Stomach (tissue), 19 donors: ENCODE measurements at regions of chr7 and their contacts with region 1.

Region 1: GRCh38 chr7:134690016-134690415 is 43.4 kb downstream of the BPGM start:
- DNase-seq: peak in 1 of 2 donors; percentile 79
- H3K4me3 ChIP-seq: peak overlapping the region in 3 of 4 donors; percentile 21 to 25 (median 22)
- H3K27ac ChIP-seq: peak overlapping the region in 4 of 5 donors; percentile 65 to 84 (median 76)
- H3K4me1 ChIP-seq: peaks cover 0 to 26% (median 14%) of the 10 kb centered on the region in 4 donors
- H3K27me3 ChIP-seq: peaks cover 0 to 4% (median 0%) of the 10 kb centered on the region in 3 donors
- CTCF ChIP-seq: peak in 2 of 7 experiments; percentile 21 to 39
- EP300 ChIP-seq: no peak
- POLR2A ChIP-seq: no peak

Region 2: GRCh38 chr7:134766779-134767519 is 76.9 kb after region 1 on chr7:
- intact Hi-C with region 1: no loop called
- DNase-seq: peak in 1 of 2 donors; percentile 67
- H3K4me3 ChIP-seq: no peak overlapping the region
- H3K27ac ChIP-seq: peak overlapping the region in 3 of 5 donors; percentile 30 to 58 (median 49)
- H3K4me1 ChIP-seq: peaks cover 0 to 2% (median 1%) of the 10 kb centered on the region in 4 donors
- H3K27me3 ChIP-seq: no peaks in the 10 kb centered on the region
- CTCF ChIP-seq: no peak
- EP300 ChIP-seq: no peak
- POLR2A ChIP-seq: no peak

Region 3: DNA sequence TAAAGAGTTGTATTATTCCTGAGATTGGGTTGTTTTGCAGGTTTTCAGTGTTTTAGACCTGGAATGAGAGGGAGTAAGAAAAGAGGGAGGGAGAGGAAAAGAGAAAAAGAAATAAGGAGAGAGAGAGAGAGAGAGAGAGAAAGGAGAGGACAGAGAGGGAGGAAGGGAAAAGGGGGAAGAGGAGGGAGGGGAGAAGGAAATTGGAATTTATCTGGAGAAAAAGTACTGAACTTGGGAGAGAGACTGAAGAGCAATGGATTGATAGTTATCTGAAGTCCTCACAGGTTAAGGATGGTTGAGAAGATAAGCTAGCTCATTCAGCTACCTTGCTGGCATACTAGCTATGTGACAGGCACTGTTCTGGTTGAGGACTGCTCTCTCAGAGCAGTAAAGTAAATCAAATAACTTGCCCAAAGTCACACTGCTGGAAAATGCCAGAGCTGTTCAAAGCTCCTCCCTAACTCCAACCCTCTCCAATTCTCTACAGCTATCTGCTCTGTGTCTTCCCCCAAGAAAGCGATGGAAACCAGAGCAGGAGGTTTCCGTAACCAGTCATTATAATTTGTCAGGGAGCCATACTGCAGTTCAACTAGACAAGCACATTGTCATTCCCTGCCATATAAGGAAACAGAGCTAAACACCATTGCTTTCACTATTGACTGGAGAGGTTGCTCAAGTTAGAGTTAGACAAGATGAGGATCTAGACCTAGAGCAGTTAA is 100.1 kb after region 1 on chr7:
- intact Hi-C with region 1: no loop called
- DNase-seq: peak in 1 of 2 donors; percentile 91
- H3K4me3 ChIP-seq: no peak overlapping the region
- H3K27ac ChIP-seq: peak overlapping the region in 4 of 5 donors; percentile 67 to 91 (median 74)
- H3K4me1 ChIP-seq: peaks cover 0 to 76% (median 22%) of the 10 kb centered on the region in 4 donors
- H3K27me3 ChIP-seq: no peaks in the 10 kb centered on the region
- CTCF ChIP-seq: no peak
- EP300 ChIP-seq: peak; percentile 80
- POLR2A ChIP-seq: no peak

Region 4: DNA sequence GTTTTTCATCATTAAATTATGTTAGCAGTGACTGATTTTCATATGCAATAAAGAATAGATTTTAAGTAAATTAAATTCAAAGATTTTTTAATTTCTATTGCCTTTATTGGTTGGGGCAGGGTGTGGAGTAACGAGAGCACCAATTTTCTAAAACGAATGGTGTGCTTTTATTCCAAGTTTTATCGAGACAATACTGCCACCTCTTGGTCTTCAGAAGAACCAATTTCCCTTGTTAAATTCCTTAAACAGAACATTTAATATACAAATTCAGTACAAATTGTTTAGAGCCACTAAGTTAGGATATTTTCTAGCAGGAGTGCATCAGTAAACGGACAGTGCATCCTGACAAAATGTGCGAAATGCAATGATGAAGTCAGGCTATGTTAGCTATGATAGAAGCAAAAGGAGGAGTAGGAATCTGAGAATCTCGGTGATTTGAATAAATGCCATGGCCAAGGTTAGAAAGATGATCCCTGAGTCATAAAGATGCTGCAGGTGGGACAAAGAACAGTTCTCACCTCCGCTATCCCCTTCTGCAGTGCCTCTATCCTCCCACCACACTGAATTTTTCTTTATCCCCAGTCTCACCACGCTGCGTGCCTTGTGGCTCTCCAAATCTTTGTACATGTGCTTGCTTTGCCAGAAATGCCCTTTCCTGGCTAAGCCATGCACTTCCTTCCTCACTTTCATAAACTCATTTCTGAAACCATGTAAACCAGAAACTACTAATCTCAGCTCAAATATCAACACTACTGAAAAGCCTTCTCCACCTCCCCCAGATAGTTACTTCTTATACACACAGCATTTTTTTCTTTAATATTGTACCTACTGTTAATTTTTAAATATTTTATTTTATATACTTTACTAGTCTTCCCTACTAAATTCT is 264.4 kb after region 1 on chr7:
- intact Hi-C with region 1: loop called (anchors 10 kb)
- DNase-seq: peak in 1 of 2 donors; percentile 59
- H3K4me3 ChIP-seq: no peak overlapping the region
- H3K27ac ChIP-seq: peak overlapping the region in 2 of 5 donors; percentile 0 to 46
- H3K4me1 ChIP-seq: peaks cover 0 to 12% (median 0%) of the 10 kb centered on the region in 4 donors
- H3K27me3 ChIP-seq: no peaks in the 10 kb centered on the region
- CTCF ChIP-seq: peak in 5 of 7 experiments; percentile 25 to 49 (median 44)
- EP300 ChIP-seq: no peak
- POLR2A ChIP-seq: no peak